ENCODE measurements at regions of chr2 and their contacts with region 1.

Region 1: DNA sequence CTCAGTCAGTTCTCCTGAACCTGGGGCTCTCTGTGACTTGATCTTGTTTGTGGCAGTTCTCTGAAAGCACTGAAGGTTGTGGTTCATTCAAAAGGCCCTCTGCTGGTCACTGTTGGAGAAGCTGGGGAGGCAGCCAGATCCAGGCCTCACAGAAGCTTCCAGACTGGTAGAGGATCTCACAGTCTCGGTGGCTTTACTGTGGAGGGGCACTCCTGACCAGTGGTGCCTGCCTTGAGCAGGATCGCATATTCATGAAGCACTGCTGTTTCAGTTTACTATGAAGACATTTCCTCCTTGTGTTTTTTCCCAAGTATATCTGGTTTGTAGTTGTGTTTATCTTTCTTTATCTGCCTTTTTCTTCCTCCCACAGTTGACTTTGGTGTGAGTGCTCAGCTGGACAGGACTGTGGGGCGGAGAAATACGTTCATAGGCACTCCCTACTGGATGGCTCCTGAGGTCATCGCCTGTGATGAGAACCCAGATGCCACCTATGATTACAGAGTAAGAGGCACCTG is 133.9 kb downstream of the MAP4K4 start:
- DNase-seq: peak; percentile 82
- H3K4me3 ChIP-seq: no peak overlapping the region
- H3K27ac ChIP-seq: no peak overlapping the region
- H3K4me1 ChIP-seq: no peaks in the 10 kb centered on the region
- H3K27me3 ChIP-seq: no peaks in the 10 kb centered on the region
- CTCF ChIP-seq: peak; percentile 65

Region 2: GRCh38 chr2:101419096-101419663 is 412.2 kb before region 1 on chr2:
- intact Hi-C with region 1: loop called (anchors 2 kb)
- DNase-seq: peak; percentile 68
- H3K4me3 ChIP-seq: no peak overlapping the region
- H3K27ac ChIP-seq: no peak overlapping the region
- H3K4me1 ChIP-seq: no peaks in the 10 kb centered on the region
- H3K27me3 ChIP-seq: no peaks in the 10 kb centered on the region
- CTCF ChIP-seq: peak; percentile 60

Region 3: DNA sequence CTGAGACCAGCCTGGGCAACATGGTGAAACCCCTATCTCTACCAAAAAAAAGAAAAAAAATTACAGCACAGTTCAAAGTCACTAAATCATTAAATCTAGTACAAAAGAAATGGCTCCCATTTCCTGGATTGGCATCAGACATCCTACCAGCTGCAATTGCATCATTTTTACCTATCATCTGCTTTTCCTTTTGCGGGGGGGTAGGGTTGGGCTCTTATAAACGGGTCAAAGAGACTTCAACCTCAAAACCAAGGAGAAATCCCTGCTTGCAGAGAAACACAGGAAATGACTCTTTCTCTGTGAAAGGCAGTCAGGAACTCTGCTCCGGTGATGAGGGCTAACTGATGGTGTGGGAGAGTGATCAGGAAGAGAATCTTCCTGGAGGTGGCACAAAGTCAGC is 311.2 kb before region 1 on chr2:
- intact Hi-C with region 1: loop called (anchors 5 kb)
- DNase-seq: no peak
- H3K4me3 ChIP-seq: no peak overlapping the region
- H3K27ac ChIP-seq: no peak overlapping the region
- H3K4me1 ChIP-seq: no peaks in the 10 kb centered on the region
- H3K27me3 ChIP-seq: no peaks in the 10 kb centered on the region
- CTCF ChIP-seq: no peak

Measured in colonic mucosa (tissue), 4 donors.